BJ (cell line): ENCODE measurements at regions of chr1 and their contacts with region 1.

Region 1: DNA sequence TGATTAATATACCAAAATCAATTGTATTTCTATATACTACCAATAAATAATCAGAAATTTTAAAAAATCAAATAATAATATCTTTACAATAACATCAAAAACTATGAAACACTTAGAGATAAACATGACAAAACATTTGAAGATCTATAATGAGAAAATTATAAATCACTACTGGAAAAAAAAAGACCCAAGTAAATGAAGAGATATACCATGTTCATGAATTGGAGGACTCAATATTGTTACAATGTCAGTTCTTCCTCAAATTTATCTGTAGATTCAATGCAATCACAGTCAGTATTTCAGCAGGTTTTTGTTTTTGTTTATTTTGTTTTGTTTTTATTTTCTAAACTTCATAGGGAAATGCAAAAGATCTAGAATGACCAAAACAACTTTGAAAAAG is 4.2 kb upstream of the ITPKB start:
- DNase-seq: no peak
- H3K4me3 ChIP-seq: no peak overlapping the region
- H3K27me3 ChIP-seq: peaks cover 1% of the 10 kb centered on the region; the same call in 1 of the 2 replicates
- CTCF ChIP-seq: no peak

Region 2: GRCh38 chr1:226717256-226717909 is 25.9 kb before region 1 on chr1:
- CTCF ChIA-PET with region 1: no interaction called
- POLR2A ChIA-PET with region 1: no interaction called
- DNase-seq: no peak
- H3K4me3 ChIP-seq: no peak overlapping the region
- H3K27me3 ChIP-seq: no peaks in the 10 kb centered on the region
- CTCF ChIP-seq: no peak

Region 3: DNA sequence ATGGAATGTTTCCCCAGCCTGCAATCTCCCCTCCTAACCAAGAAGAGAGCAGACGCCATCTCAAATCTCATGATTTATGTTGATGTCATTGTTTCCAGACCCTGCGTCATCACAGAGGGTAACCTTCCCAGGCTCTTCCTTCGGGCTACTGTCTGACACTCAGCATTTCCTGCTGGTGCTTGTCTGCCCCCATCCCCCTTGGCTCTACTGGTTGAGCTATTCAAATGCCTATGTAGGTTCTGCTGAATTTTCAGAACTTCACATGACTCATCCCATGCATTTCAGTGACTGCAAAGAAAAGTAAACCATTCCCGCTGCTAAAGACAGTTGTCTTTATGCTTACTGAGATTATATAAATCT is 20.6 kb after region 1 on chr1:
- CTCF ChIA-PET with region 1: interaction called, 3 read pairs
- POLR2A ChIA-PET with region 1: interaction called, 17 read pairs
- DNase-seq: peak; percentile 45
- H3K4me3 ChIP-seq: no peak overlapping the region
- H3K27me3 ChIP-seq: no peaks in the 10 kb centered on the region
- CTCF ChIP-seq: no peak